ENCODE measurements at regions of chr19 and their contacts with region 1.

Region 1: GRCh38 chr19:19554074-19555023 is 16.3 kb downstream of the CILP2 start:
- DNase-seq: peak; percentile 75
- H3K4me3 Mint-ChIP-seq: no peak overlapping the region
- H3K27ac Mint-ChIP-seq: no peak overlapping the region
- H3K4me1 Mint-ChIP-seq: peaks cover 10% of the 10 kb centered on the region
- H3K27me3 Mint-ChIP-seq: no peaks in the 10 kb centered on the region

Region 2: GRCh38 chr19:19224852-19225494 is 329.4 kb before region 1 on chr19:
- CTCF ChIA-PET with region 1: no interaction called
- intact Hi-C with region 1: no loop called
- DNase-seq: peak; percentile 81
- H3K4me3 Mint-ChIP-seq: peak overlapping the region; percentile 56
- H3K27ac Mint-ChIP-seq: no peak overlapping the region
- H3K4me1 Mint-ChIP-seq: peaks cover 2% of the 10 kb centered on the region
- H3K27me3 Mint-ChIP-seq: peaks cover 12% of the 10 kb centered on the region

Region 3: DNA sequence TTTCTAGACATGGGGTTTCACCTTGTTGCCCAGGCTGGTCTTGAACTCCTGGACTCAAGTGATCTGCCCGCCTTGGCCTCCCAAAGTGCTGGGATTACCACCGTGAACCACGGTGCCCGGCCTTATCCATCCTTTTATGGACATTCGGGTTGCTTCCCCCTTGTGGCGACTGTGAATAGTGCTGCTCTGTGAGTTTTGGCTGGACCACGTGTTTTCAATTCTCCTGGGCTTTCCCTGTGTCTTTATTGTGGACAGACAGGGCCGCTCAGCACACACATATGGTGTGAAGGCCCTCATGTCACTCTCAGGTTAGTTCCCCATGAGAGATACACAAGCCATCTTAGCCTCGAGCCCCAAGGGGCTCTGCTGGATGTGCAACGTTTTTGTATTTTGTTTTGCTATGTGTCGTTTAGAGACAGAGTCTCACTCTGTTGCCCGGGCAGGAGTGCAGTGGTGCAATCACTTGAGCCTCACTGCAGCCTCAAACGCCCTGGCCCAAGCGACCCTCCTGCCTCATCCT is 193.2 kb before region 1 on chr19:
- CTCF ChIA-PET with region 1: no interaction called
- intact Hi-C with region 1: no loop called
- DNase-seq: peak; percentile 92
- H3K4me3 Mint-ChIP-seq: no peak overlapping the region
- H3K27ac Mint-ChIP-seq: no peak overlapping the region
- H3K4me1 Mint-ChIP-seq: peaks cover 27% of the 10 kb centered on the region
- H3K27me3 Mint-ChIP-seq: no peaks in the 10 kb centered on the region

Region 4: DNA sequence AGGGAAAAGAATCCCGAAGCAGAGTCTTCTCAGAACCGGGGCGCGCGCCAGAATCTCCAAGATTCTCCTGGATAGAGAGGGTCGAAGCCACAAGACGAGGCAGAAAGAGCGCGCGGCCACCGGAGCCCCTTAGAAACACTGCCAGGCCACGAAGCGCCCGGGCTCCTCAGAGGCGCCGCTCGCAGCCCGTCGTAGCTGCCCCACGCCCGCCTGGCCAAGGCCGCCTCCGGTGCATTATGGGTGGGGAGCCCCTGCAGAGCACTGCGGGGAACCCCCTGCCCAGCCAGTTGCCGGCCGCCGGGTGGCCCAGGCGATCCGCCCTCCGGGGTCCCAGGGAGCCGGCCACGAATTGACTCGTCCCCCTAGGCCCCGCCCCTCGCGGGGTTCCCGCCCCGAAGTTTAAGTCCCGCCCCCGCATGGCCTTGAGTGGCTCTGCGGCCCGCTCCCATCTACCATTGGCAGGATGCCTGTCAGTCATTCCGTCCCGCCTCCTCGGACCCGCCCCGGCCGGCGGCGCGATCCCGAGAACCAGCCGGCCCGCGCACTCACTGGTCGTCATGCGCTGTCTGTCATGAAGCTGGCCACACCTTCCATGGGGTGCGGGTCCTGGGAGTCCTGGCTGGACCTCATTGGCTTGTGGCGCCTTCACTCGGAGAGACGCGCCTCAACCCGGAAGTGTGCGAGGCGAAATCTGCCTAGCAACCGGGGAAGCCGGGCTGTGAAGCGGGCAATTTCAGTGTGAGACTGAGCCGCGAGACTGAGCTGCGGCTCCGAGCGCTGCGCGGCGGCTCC is 169.0 kb before region 1 on chr19:
- CTCF ChIA-PET with region 1: no interaction called
- intact Hi-C with region 1: no loop called
- DNase-seq: peak; percentile 100
- H3K4me3 Mint-ChIP-seq: peak overlapping the region; percentile 84
- H3K27ac Mint-ChIP-seq: peak overlapping the region; percentile 72
- H3K4me1 Mint-ChIP-seq: peaks cover 38% of the 10 kb centered on the region
- H3K27me3 Mint-ChIP-seq: no peaks in the 10 kb centered on the region

Region 5: GRCh38 chr19:19540715-19541440 is 13.5 kb before region 1 on chr19:
- CTCF ChIA-PET with region 1: interaction called, 12 read pairs
- intact Hi-C with region 1: no loop called
- DNase-seq: peak; percentile 87
- H3K4me3 Mint-ChIP-seq: peak overlapping the region; percentile 62
- H3K27ac Mint-ChIP-seq: no peak overlapping the region
- H3K4me1 Mint-ChIP-seq: peaks cover 33% of the 10 kb centered on the region
- H3K27me3 Mint-ChIP-seq: peaks cover 8% of the 10 kb centered on the region

Region 6: DNA sequence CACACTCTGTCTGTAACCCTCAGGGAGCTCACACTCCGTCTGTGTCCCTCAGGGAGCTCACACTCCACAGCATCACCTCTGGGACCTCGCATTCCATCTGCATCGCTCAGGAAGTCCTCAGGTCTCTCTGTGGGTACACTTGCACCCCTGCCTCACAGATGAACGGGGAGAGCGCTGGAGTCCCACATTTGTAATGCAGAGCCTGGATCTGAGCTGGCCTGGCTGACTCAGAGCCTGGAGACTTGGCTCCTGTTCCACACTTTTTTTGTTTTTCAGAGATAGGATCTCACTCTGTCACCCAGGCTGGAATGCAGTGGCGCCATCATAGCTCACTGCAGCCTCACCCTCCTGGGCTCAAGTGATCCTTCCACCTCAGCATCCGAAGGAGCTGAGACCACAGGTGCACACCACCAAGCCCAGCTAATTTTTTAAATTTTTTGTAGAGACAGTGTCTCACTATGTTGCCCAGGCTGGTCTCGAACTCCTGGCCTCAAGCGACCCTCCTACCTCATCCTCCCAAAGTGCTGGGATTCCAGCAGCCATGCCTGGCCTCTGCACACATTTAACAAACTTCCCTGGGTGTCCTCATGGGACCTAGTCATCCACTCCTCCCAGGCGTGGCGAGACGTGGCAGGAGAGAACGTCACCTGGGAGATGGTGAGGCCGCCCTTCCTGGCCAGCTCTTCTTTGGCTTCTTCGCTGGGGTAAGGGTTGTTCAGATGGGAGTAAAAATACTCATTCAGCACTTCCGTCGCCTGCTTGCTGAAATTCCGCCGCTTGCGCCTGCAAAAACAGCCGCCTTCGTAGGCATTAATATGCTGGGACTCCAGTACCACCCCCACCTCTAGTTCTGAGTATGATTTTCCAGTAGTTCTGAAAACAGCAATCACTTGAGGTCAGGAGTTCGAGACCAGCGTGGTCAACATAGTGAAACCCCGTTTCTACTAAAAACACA is 14.7 kb after region 1 on chr19:
- CTCF ChIA-PET with region 1: interaction called, 18 read pairs
- intact Hi-C with region 1: no loop called
- DNase-seq: no peak
- H3K4me3 Mint-ChIP-seq: no peak overlapping the region
- H3K27ac Mint-ChIP-seq: no peak overlapping the region
- H3K4me1 Mint-ChIP-seq: no peaks in the 10 kb centered on the region
- H3K27me3 Mint-ChIP-seq: no peaks in the 10 kb centered on the region

Region 7: DNA sequence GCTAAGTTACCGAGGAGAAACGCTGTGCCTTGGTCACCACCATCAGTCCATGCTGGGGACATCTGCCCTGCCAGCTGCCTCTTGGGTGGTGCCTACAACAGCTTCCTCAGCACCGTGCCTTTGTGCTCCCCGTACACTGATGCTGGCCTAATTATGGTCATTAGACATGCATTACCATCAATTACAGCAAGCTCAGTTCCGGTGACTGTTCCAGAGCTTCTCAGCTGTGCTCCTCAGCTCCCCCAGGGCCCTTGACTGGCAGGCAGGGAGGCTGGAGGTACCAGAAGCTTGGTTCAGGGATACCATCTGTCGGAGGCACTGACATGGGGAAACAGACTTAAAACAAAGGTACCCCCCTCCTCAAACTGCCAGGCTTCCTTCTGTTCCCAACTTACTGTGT is 23.9 kb after region 1 on chr19:
- CTCF ChIA-PET with region 1: interaction called, 19 read pairs
- intact Hi-C with region 1: no loop called
- DNase-seq: no peak
- H3K4me3 Mint-ChIP-seq: no peak overlapping the region
- H3K27ac Mint-ChIP-seq: no peak overlapping the region
- H3K4me1 Mint-ChIP-seq: peaks cover 17% of the 10 kb centered on the region
- H3K27me3 Mint-ChIP-seq: no peaks in the 10 kb centered on the region

Region 8: GRCh38 chr19:19696386-19696785 is 142.0 kb after region 1 on chr19:
- CTCF ChIA-PET with region 1: no interaction called
- intact Hi-C with region 1: no loop called
- DNase-seq: no peak
- H3K4me3 Mint-ChIP-seq: no peak overlapping the region
- H3K27ac Mint-ChIP-seq: no peak overlapping the region
- H3K4me1 Mint-ChIP-seq: no peaks in the 10 kb centered on the region
- H3K27me3 Mint-ChIP-seq: no peaks in the 10 kb centered on the region

Measured in activated naive CD4-positive, alpha-beta T cell treated with anti-CD3 and anti-CD28 coated beads for 36 hours (primary cell).